Esophagus muscularis mucosa (tissue), 4 donors: ENCODE measurements at regions of chr2 and their contacts with region 1.

Region 1: DNA sequence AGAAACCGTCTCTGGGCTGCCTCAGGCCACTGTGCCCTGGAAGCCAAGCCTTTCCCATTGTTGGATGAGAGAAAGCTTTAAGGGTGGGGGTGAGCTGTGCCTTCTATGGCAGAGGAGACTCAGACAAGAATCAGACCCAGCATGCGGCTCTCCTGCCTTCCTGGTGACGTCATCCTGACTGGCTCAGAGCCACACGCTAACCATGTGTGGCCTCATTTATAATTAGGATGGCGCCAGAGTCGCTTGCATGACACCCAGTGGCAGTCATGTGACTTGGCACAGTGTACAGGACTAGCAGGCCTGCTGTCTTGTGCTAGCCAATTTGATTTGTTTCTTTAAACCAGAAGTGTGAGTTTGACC is 99.2 kb downstream of the SH3BP4 start:
- DNase-seq: peak; percentile 94
- H3K4me3 ChIP-seq: peak overlapping the region in 1 of 4 donors; percentile 7
- H3K27ac ChIP-seq: peak overlapping the region; percentile 58 to 73 (median 64)
- H3K4me1 ChIP-seq: peaks cover 19 to 39% (median 34%) of the 10 kb centered on the region in 4 donors
- H3K27me3 ChIP-seq: no peaks in the 10 kb centered on the region
- CTCF ChIP-seq: peak in 1 of 3 experiments; percentile 5
- EP300 ChIP-seq: no peak
- POLR2A ChIP-seq: no peak

Region 2: GRCh38 chr2:234881413-234882241 is 169.3 kb before region 1 on chr2:
- intact Hi-C with region 1: loop called (anchors 10 kb)
- DNase-seq: no peak
- H3K4me3 ChIP-seq: peak overlapping the region in 2 of 4 donors; percentile 27
- H3K27ac ChIP-seq: peak overlapping the region in 3 of 4 donors; percentile 34 to 43 (median 35)
- H3K4me1 ChIP-seq: peaks cover 9 to 20% (median 18%) of the 10 kb centered on the region in 4 donors
- H3K27me3 ChIP-seq: no peaks in the 10 kb centered on the region
- CTCF ChIP-seq: peak; percentile 71 to 72 (median 72)
- EP300 ChIP-seq: no peak
- POLR2A ChIP-seq: no peak

Region 3: GRCh38 chr2:234951664-234952269 is 99.2 kb before region 1 on chr2 and contains the start of gene SH3BP4:
- intact Hi-C with region 1: loop called (anchors 2 kb)
- DNase-seq: no peak
- H3K4me3 ChIP-seq: peak within 1 kb of the TSS; percentile 80 to 96 (median 90)
- H3K27ac ChIP-seq: peak within 1 kb of the TSS; percentile 85 to 88 (median 86)
- H3K4me1 ChIP-seq: peaks cover 22 to 63% (median 48%) of the 10 kb centered on the region in 4 donors
- H3K27me3 ChIP-seq: peaks cover 0 to 4% (median 0%) of the 10 kb centered on the region in 4 donors
- CTCF ChIP-seq: no peak
- EP300 ChIP-seq: no peak
- POLR2A ChIP-seq: no peak
- total RNA-seq, gene SH3BP4: 25.3 to 63.1 (median 48.4) TPM

Region 4: DNA sequence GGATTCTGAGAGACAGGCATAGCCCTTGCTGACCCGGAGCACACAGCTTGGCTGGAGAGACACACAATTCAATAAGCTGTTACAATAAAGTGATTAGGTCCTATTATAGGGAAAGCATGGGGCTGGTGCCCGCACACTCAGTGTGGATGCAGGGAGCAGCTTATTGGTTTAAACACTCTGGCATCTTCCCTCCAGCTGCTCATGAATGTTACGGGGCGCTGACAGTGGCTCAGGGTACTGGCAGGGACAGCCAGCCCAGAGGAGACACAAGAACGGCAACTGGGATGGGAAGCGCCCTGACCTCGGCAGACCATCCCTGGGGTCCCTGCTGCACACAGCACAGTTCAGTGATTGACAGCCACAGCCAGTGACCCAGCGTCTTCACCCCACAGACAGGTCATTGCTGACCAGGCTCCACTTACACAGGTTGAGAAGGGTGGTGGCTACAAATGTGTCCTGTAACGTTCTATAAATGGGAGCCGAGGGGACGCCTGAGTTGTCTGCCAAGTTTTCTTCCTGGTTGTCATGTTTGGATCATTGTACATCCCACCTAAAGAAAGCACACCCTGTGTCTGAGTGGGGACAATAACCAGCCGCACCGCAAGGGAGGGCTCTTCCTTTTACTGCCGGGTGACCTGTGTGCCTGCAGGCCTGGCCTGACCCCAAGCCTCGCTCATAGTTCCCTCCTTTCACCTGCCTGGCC is 38.9 kb before region 1 on chr2:
- intact Hi-C with region 1: no loop called
- DNase-seq: no peak
- H3K4me3 ChIP-seq: no peak overlapping the region
- H3K27ac ChIP-seq: no peak overlapping the region
- H3K4me1 ChIP-seq: peaks cover 0 to 21% (median 5%) of the 10 kb centered on the region in 4 donors
- H3K27me3 ChIP-seq: no peaks in the 10 kb centered on the region
- CTCF ChIP-seq: no peak
- EP300 ChIP-seq: no peak
- POLR2A ChIP-seq: no peak